ENCODE measurements at regions of chr2 and their contacts with region 1.

Region 1: DNA sequence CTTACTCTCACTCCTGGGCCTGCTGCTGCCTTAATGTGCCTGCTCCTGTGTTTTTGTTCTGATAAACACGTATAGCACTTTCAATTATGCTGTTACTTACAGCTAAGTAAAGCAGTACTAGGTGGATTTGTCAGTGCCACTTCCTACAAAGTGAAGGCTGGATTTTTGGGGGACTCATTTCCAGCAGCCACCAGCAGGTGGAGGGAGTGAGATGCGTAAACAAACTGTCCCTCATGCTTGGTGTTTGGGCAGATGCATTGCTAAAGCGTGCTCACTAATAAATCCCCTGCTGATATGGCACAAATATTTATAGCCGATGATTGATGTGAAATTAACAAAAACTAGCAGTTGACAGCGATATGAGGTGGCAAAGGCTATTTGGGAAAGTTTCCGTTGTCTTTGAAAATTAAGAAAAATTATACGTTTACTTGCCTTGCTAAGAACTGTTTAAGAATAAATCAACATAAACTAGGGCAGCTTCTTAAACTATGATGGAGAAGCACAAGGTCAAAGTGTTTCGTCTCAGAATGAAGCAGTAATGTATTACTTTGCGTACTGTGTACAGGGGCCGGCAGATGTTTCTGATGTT is 101.7 kb downstream of the AGAP1 start:
- DNase-seq: peak; percentile 60
- H3K4me3 Mint-ChIP-seq: no peak overlapping the region
- H3K27ac Mint-ChIP-seq: no peak overlapping the region
- H3K4me1 Mint-ChIP-seq: no peaks in the 10 kb centered on the region
- H3K27me3 Mint-ChIP-seq: peaks cover 6% of the 10 kb centered on the region

Region 2: DNA sequence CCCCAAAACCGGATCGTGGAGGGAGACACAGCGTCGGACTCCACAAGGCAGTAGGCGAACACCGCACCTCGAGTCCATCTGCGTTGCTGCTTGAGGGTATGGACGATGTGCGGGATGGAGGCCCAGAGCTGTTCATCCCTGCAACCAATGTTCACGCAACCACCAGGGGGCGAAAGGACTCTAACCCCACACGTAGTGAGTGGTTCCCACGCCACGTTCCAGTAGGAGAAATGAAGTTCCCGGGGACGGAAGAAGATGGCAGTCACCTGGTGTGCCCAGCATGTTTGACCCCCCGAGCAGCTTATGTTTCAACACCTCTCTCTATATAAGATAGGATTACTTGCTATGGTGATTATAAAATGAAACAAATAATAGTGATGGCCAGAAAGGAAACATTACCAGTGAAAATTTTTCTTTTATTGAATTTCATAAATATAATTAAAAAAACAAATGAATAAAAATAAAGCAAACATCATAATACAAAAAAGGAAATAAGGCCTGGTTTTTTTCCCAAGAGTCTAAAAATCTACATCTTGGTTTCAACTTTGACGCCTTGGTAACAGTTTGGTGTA is 459.4 kb before region 1 on chr2:
- CTCF ChIA-PET with region 1: interaction called, 26 read pairs
- POLR2A ChIA-PET with region 1: no interaction called
- intact Hi-C with region 1: no loop called
- DNase-seq: peak; percentile 60
- H3K4me3 Mint-ChIP-seq: no peak overlapping the region
- H3K27ac Mint-ChIP-seq: no peak overlapping the region
- H3K4me1 Mint-ChIP-seq: no peaks in the 10 kb centered on the region
- H3K27me3 Mint-ChIP-seq: peaks cover 21% of the 10 kb centered on the region

Region 3: GRCh38 chr2:235416864-235417499 is 178.5 kb before region 1 on chr2:
- CTCF ChIA-PET with region 1: no interaction called
- POLR2A ChIA-PET with region 1: no interaction called
- intact Hi-C with region 1: no loop called
- DNase-seq: no peak
- H3K4me3 Mint-ChIP-seq: no peak overlapping the region
- H3K27ac Mint-ChIP-seq: no peak overlapping the region
- H3K4me1 Mint-ChIP-seq: no peaks in the 10 kb centered on the region
- H3K27me3 Mint-ChIP-seq: peaks cover 3% of the 10 kb centered on the region

Region 4: DNA sequence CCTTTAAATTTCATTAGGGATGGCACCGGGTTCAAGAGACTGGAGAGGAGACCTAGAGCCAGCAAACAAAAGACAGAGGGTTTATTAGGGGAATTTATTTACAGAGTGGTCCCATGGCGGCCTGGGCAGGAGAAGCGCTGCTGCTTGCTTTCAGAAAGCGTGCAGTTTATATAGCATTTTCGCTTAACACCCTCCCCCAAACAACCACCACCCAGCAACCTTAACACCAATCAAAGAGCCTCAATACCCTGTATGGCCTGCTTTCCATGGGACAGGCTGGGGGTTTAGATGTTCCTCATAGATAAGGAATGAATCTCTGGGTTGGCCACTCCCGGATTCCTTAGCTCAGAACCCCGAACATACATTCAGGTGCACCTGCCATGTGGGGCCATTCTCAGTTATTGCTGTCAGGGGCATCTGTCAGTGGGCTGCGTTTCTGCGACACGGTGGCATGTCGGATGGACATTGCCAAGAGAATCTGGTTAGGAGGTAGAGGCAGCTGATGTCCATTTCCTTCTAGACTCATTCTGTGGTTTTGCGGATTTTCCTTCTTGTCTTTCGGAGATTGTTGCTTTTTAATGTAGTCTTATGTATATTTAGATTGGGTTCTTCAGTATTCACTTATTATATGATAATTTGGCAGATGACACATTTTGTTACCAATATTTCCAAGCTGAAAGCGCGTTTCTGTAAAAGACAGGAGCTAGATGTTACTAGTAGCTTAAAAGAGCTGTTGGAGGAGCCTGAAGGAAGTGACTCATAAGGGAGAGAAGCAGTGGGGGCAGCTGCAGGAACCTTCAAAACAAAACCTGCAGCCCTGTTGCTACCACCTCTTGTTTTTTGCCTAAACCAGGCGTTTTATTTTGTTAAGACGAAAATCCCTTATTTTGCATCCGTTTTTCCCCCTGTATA is 94.5 kb before region 1 on chr2:
- CTCF ChIA-PET with region 1: no interaction called
- POLR2A ChIA-PET with region 1: no interaction called
- intact Hi-C with region 1: loop called (anchors 10 kb)
- DNase-seq: peak; percentile 30
- H3K4me3 Mint-ChIP-seq: no peak overlapping the region
- H3K27ac Mint-ChIP-seq: no peak overlapping the region
- H3K4me1 Mint-ChIP-seq: peaks cover 12% of the 10 kb centered on the region
- H3K27me3 Mint-ChIP-seq: peaks cover 64% of the 10 kb centered on the region

Region 5: DNA sequence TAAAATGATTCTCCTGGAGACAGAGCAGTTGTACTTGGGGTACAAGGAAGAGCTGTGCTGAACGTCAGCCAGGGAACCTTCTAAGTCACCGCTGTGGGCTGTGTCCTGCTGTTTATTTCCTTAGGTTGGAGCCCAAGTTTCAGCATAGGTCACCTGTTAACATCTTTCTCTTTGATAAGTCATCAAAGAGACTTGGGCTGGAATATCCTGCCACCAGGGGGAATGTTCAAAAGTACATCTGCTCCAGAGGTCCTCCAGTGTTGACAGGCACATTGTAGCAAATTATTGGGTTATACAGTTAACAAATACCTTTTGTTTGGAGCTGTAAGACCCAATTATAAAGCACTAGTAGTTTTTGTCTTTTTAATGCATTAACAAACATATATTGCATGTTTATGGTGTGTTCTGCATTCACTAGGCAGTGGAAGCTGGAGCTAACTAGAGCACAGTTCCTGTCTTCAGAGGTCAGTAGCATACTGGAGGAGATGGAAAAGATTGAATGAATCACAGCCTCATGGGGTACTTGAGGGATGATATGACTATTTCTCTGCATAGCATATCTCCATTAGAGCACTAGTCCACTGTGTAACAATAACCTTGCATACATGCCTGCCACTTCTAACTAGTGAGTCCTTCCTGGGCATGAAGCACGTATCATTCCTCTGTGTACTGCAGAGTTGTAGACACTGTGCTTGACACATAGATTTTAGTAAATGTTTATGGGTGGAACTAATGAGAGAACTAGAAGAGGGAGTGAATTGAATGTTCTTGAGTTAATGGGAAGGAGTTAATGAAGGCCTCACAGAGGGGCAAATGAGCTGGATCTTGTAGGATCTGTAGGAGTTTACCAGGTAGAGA is 80.4 kb after region 1 on chr2:
- CTCF ChIA-PET with region 1: no interaction called
- POLR2A ChIA-PET with region 1: no interaction called
- intact Hi-C with region 1: no loop called
- DNase-seq: no peak
- H3K4me3 Mint-ChIP-seq: no peak overlapping the region
- H3K27ac Mint-ChIP-seq: no peak overlapping the region
- H3K4me1 Mint-ChIP-seq: peaks cover 1% of the 10 kb centered on the region
- H3K27me3 Mint-ChIP-seq: peaks cover 27% of the 10 kb centered on the region

Region 6: DNA sequence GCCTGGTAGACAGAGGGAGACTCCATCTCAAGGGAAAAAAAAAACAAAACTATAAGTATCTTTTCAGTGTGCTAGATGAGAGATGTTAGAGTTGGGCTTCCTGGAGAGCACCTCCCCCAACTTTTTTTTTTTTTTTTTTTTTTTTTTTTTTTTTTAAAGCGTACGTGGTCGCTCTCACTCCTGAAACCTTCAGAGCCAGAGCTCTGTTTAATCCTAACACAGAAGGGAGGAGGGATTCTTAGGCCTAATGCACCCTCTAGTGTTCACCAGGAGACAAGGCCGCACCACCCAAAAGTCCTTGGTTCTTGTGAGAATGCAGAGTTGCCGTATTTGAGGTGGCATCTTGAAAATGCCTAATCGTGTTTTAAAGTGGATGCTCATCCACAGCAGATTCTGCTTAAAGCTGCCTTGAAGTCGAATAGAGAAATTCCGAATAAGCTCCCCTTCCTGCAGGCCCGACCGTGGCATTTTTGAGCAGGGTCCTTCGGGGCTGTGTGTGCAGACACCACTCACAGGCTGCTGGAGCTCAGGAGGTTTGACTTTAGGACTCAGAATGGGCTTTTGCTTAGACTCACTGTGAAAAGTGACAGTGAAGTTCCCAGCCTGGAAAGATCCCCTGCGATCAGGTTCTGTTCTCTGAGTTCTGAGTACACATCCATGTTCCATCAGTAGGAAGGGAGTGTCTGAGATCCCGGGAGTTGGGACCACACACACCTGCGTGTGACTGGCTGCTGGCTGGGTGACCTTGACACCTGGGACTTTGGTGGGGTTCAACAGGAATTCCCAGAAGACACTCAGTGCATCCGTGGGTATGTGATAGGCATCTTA is 151.0 kb after region 1 on chr2:
- CTCF ChIA-PET with region 1: interaction called, 41 read pairs
- POLR2A ChIA-PET with region 1: no interaction called
- intact Hi-C with region 1: loop called (anchors 1 kb)
- DNase-seq: peak; percentile 64
- H3K4me3 Mint-ChIP-seq: no peak overlapping the region
- H3K27ac Mint-ChIP-seq: no peak overlapping the region
- H3K4me1 Mint-ChIP-seq: no peaks in the 10 kb centered on the region
- H3K27me3 Mint-ChIP-seq: peaks cover 10% of the 10 kb centered on the region